Activated CD4-positive, alpha-beta memory T cell treated with anti-CD3 and anti-CD28 coated beads, Interleukin-2, amount 10 ng/mL, durations not matched to agents 7 days and 5 days (primary cell): ENCODE measurements at regions of chr9 and their contacts with region 1.

Region 1: DNA sequence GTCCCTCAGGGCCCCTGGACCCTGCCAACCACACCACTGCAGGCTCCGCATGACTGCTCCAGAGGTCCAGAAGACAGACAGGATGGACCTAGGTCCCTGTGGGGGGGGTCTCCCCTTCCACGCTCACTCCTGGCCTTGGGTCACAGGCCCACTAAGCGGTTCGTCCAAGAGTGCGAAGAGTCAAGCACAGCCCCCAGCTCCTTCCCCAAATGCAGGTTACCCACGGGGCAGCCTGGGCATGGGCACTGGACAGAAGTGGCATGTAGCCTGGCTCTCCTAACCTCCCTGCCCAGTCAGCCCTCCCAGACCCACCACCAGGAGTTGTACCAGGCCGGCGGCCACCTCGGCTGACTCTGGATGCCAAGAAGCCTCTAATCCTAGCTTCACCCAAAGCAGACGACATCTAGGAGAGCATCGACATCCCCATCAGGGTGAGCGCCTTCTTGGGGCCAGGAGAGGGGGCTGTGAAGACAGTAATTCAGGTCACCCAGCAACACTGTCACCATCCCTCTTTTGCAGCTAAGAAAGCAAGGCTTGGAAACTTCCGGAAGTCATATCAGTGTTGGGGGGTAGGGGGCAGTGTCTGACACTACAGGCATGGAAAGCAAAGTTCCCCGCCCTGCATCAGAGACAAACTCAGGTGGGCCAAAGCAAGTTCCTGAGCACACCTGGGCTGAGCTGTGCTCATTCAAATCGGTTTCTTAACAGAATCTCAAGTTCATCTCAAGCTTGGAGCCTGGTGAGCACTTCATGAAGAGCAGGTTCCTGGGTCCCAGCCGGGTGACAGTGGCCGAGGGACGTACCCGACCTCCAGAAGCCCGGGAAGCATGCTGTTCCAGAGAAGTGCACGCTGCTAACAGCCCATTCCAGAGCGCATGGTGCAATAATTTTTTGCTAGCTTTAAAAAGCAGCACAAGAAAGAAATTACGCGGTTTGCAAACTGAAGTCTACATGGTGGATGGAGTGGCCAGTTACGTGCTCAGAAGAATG is 68.7 kb downstream of the SEMA4D start:
- DNase-seq: peak; percentile 63
- H3K4me3 Mint-ChIP-seq: no peak overlapping the region
- H3K27ac Mint-ChIP-seq: peak overlapping the region; percentile 97
- H3K4me1 Mint-ChIP-seq: peaks cover 89% of the 10 kb centered on the region
- H3K27me3 Mint-ChIP-seq: no peaks in the 10 kb centered on the region

Region 2: GRCh38 chr9:89364666-89365531 is 64.3 kb before region 1 on chr9:
- CTCF ChIA-PET with region 1: no interaction called
- POLR2A ChIA-PET with region 1: no interaction called
- DNase-seq: no peak
- H3K4me3 Mint-ChIP-seq: no peak overlapping the region
- H3K27ac Mint-ChIP-seq: peak overlapping the region; percentile 14
- H3K4me1 Mint-ChIP-seq: peaks cover 13% of the 10 kb centered on the region
- H3K27me3 Mint-ChIP-seq: no peaks in the 10 kb centered on the region

Region 3: GRCh38 chr9:89410641-89411350 is 18.4 kb before region 1 on chr9:
- CTCF ChIA-PET with region 1: interaction called, 10 read pairs
- POLR2A ChIA-PET with region 1: interaction called, 63 read pairs
- DNase-seq: peak; percentile 56
- H3K4me3 Mint-ChIP-seq: peak overlapping the region; percentile 58
- H3K27ac Mint-ChIP-seq: peak overlapping the region; percentile 93
- H3K4me1 Mint-ChIP-seq: peaks cover 99% of the 10 kb centered on the region
- H3K27me3 Mint-ChIP-seq: no peaks in the 10 kb centered on the region

Region 4: GRCh38 chr9:89442981-89443814 is 14.0 kb after region 1 on chr9:
- CTCF ChIA-PET with region 1: interaction called, 13 read pairs
- POLR2A ChIA-PET with region 1: interaction called, 15 read pairs
- DNase-seq: no peak
- H3K4me3 Mint-ChIP-seq: no peak overlapping the region
- H3K27ac Mint-ChIP-seq: no peak overlapping the region
- H3K4me1 Mint-ChIP-seq: peaks cover 88% of the 10 kb centered on the region
- H3K27me3 Mint-ChIP-seq: no peaks in the 10 kb centered on the region

Region 5: GRCh38 chr9:89466451-89467277 is 37.5 kb after region 1 on chr9:
- CTCF ChIA-PET with region 1: interaction called, 6 read pairs
- POLR2A ChIA-PET with region 1: interaction called, 10 read pairs
- DNase-seq: no peak
- H3K4me3 Mint-ChIP-seq: peak overlapping the region; percentile 40
- H3K27ac Mint-ChIP-seq: peak overlapping the region; percentile 80
- H3K4me1 Mint-ChIP-seq: peaks cover 96% of the 10 kb centered on the region
- H3K27me3 Mint-ChIP-seq: no peaks in the 10 kb centered on the region

Region 6: GRCh38 chr9:89505911-89506310 is 76.7 kb after region 1 on chr9:
- CTCF ChIA-PET with region 1: interaction called, 11 read pairs
- POLR2A ChIA-PET with region 1: interaction called, 5 read pairs
- DNase-seq: no peak
- H3K4me3 Mint-ChIP-seq: no peak overlapping the region
- H3K27ac Mint-ChIP-seq: no peak overlapping the region
- H3K4me1 Mint-ChIP-seq: peaks cover 76% of the 10 kb centered on the region
- H3K27me3 Mint-ChIP-seq: no peaks in the 10 kb centered on the region